Mammary epithelial cell (primary cell): ENCODE measurements at regions of chr20 and their contacts with region 1.

Region 1: GRCh38 chr20:8305449-8305978 is 173.4 kb downstream of the PLCB1 start:
- DNase-seq: peak; percentile 58
- H3K4me3 ChIP-seq: no peak overlapping the region
- H3K27ac ChIP-seq: no peak overlapping the region
- H3K4me1 ChIP-seq: no peaks in the 10 kb centered on the region
- H3K27me3 ChIP-seq: no peaks in the 10 kb centered on the region
- CTCF ChIP-seq: peak; percentile 77 to 81

Region 2: DNA sequence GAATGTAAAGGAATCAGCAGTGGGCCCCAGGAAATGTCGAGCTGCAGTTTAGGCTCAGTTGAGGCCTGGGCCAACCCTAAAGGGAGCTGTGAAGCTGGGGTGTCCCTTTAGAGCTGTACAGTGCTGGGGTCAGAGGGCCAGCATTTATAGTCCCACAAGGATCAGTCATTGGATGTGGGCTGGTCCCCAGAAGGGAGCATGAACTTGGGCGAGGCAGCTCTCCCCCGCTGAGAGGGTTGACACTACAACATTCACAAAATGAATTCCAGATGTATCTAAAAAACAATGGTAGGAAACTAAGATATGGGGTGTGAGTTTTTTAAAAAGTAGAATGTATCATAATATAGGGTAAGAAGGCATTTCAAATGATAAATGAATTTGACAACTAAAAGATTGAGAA is 256.2 kb before region 1 on chr20:
- CTCF ChIA-PET with region 1: no interaction called
- dilution Hi-C with region 1: no loop called
- in situ Hi-C with region 1: no loop called
- intact Hi-C with region 1: loop called (anchors 5 kb)
- DNase-seq: no peak
- H3K4me3 ChIP-seq: no peak overlapping the region
- H3K27ac ChIP-seq: no peak overlapping the region
- H3K4me1 ChIP-seq: no peaks in the 10 kb centered on the region
- H3K27me3 ChIP-seq: peaks cover 3% of the 10 kb centered on the region
- CTCF ChIP-seq: no peak

Region 3: DNA sequence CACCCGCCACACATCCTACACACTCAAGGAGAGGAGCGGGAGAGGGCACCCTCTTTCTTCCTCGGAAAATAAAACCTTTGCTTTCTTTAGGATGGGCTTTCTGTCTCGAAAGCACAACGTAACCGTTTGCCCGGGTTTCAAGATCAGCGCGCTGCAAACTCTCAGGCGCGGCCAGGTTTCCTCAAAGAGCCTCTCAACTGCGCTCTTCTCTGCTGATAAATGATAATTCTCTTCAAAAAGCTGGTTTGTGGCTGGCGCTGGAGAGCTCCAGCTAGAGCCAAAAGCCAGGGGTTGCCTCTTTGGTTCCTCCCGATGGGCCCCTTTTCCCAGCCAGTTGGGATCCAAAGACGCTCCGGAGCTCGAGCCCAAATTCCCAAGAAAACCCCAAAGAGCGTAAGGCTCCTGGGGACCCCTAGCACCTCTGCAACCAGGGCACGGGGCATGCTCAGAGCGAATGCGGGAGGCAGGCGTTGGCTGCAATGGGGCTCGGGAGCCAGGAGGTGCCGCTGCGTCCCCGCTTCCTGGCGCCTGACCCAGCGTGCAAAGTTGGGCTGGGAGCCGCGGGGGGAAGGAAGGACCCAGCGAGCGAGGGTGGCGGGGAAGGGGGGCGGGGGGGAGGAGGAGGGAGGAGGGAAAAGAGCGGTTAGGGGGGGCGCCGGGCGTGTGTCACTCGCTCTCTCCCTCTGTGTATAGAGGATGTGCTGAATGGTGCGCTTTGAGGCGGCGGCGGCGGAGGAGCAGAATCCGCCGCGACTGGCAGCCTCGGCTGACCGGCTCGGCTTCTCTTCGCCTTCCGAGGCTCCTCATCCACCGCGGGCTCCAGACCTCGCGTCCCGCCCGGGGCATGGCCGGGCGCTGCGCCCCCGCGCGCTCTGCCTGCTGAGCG is 173.7 kb before region 1 on chr20 and contains the start of gene PLCB1:
- CTCF ChIA-PET with region 1: no interaction called
- dilution Hi-C with region 1: no loop called
- in situ Hi-C with region 1: no loop called
- intact Hi-C with region 1: loop called (anchors 1 kb)
- DNase-seq: peak; percentile 48
- H3K4me3 ChIP-seq: peak within 1 kb of the TSS; percentile 39 to 50 (median 44)
- H3K27ac ChIP-seq: no peak within 1 kb of the TSS
- H3K4me1 ChIP-seq: peaks cover 10% of the 10 kb centered on the region
- H3K27me3 ChIP-seq: peaks cover 8% of the 10 kb centered on the region
- CTCF ChIP-seq: peak; percentile 83 to 84
- total RNA-seq, gene PLCB1: 0.31 to 3.3 TPM

Region 4: DNA sequence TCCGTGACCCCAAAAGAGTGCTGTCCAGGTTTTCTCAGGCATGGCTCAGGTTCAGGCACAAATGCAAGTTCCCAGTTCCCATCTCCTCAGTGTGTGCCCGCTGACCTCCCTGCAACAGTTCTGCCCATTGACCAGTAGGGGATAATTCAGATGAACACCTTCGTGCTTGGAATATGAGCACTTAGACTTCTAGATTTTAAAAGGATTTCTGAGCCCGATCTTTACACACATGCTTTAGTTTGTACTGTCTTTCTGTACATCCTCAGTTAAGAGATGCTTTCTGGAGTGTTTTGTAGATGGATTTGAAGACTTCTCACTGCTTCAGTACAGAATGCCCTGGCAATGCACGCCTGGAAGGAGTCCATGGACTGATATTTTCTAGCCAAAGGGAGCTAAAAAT is 523.7 kb after region 1 on chr20:
- CTCF ChIA-PET with region 1: no interaction called
- dilution Hi-C with region 1: no loop called
- in situ Hi-C with region 1: no loop called
- intact Hi-C with region 1: no loop called
- DNase-seq: no peak
- H3K4me3 ChIP-seq: no peak overlapping the region
- H3K27ac ChIP-seq: no peak overlapping the region
- H3K4me1 ChIP-seq: no peaks in the 10 kb centered on the region
- H3K27me3 ChIP-seq: peaks cover 2% of the 10 kb centered on the region
- CTCF ChIP-seq: no peak